H1 (cell line): ENCODE measurements at regions of chr11 and their contacts with region 1.

Region 1: GRCh38 chr11:128936606-128937251 is 5.9 kb downstream of the TP53AIP1 start:
- DNase-seq: peak; percentile 39 to 65
- H3K4me3 ChIP-seq: no peak overlapping the region
- H3K27ac ChIP-seq: peak overlapping the region; percentile 46
- H3K4me1 ChIP-seq: peaks cover 0 to 12% (median 9%) of the 10 kb centered on the region in 4 experiments; a peak in 6 of 7 replicates
- H3K27me3 ChIP-seq: peaks cover 0 to 20% (median 10%) of the 10 kb centered on the region in 4 experiments; a peak in 6 of 7 replicates
- CTCF ChIP-seq: peak; percentile 7 to 27 (median 20); a peak in 3 of 4 replicates
- EP300 ChIP-seq: peak in 1 of 2 experiments; percentile 80; a peak in 1 of 3 replicates
- POLR2A ChIP-seq: peak in 1 of 2 experiments; percentile 38; a peak in 1 of 3 replicates
- RAD21 ChIP-seq: peak; percentile 40 to 44; a peak in 3 of 4 replicates

Region 2: DNA sequence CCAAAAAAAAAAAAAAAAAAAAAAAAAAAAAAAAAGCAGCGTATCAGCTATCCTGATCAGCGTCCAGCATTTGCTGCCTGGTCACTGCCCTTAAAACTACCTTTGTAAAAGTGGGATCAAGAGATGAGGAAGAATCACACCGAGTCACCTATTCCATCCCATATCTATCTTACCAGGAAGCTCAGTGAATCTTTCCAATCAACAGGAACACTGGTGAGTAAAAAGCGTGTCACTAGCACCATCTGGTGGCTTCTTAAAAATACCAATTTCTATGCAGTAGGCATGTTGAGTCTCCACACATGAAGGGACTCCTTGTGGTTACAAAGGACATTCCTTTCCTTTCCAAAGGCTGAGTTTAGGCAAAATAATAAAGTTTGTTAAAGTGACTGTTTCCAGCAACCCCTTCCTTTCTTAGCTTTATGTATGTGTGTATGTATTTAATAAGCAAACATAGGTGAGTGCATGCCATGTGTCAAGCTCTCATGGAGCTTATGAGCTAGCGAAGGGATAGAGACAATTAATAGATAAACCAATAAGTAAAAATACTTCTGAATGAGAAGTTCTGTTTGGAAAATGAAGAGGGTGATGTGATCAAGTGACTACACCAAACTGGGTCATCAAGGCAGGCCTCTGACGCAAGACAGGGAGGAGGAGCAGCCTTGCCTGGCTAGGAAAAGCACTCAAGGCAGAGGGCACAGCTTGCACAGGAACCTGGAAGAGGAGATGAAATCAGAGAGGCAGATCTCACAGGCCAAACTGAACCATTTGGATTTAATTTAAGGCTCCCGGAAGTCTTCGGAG is 19.9 kb after region 1 on chr11:
- CTCF ChIA-PET with region 1: interaction called, 215 read pairs
- POLR2A ChIA-PET with region 1: interaction called, 3 read pairs
- DNase-seq: no peak
- H3K4me3 ChIP-seq: no peak overlapping the region
- H3K27ac ChIP-seq: no peak overlapping the region
- H3K4me1 ChIP-seq: no peaks in the 10 kb centered on the region
- H3K27me3 ChIP-seq: peaks cover 0 to 2% (median 0%) of the 10 kb centered on the region in 4 experiments; a peak in 2 of 7 replicates
- CTCF ChIP-seq: peak in 2 of 3 experiments; percentile 79 to 86; a peak in 3 of 4 replicates
- EP300 ChIP-seq: no peak
- POLR2A ChIP-seq: no peak
- RAD21 ChIP-seq: peak; percentile 89 to 90